ENCODE measurements at regions of chr2 and their contacts with region 1.

Region 1: DNA sequence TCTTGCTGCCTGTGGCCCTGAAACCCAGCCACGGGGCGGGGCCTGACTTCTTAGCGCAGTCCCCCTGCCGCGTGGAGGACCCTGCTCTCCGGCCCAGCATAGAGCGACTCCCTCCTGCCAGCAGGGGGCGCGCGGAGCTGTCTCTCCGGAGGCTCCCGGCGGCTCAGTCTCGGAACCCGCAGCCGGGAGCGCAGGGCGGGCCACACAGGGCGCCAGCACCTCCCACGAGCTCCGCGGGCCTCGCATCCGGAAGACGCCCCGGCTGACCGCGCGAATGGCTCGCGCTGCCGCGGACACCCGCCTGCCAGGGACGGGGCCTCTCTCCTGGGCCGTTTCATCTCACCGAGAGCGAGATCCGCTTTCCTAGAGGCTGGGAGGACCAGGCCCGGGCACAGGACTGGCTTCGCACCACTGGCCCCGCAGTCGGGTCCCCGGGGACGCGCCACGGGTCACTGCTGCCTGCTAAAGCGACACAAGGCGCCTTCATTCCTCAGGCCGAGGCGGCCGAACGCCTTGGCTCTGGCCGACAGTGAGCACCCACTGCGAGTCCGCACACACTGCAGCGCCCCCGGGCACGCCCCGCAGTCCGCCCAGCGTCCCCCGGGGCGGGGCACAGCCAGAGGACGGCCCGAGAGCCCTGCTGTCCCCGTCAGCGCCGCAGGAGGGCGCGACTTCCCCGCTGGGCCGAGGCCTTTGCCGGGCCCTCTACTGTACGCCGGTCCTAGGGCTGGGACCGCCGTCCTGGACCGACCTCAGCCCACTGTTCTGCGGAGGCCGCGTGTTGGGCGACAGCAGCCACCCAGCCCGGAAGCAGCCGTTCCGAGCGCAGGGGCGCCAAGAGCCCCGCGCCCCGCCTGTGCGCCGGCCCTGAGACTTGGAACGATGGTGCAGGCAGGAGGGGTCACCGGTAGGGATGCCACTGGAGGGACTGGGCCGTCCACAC is 39.0 kb upstream of the ARHGEF4 start:
- DNase-seq: peak; percentile 89
- ATAC-seq: peak; percentile 92
- H3K4me3 ChIP-seq: peak overlapping the region; percentile 86
- H3K27ac ChIP-seq: peak overlapping the region; percentile 61
- H3K4me1 ChIP-seq: peaks cover 8% of the 10 kb centered on the region; the same call in 1 of the 2 replicates
- H3K27me3 ChIP-seq: no peaks in the 10 kb centered on the region
- CTCF ChIP-seq: peak; percentile 77

Region 2: GRCh38 chr2:130824492-130825061 is 26.8 kb after region 1 on chr2:
- CTCF ChIA-PET with region 1: interaction called, 10 read pairs
- POLR2A ChIA-PET with region 1: no interaction called
- intact Hi-C with region 1: loop called (anchors 1 kb)
- DNase-seq: peak; percentile 92
- ATAC-seq: peak; percentile 30
- H3K4me3 ChIP-seq: no peak overlapping the region
- H3K27ac ChIP-seq: peak overlapping the region; percentile 97
- H3K4me1 ChIP-seq: peaks cover 52% of the 10 kb centered on the region
- H3K27me3 ChIP-seq: no peaks in the 10 kb centered on the region
- CTCF ChIP-seq: no peak

Region 3: GRCh38 chr2:130836501-130837174 is 38.9 kb after region 1 on chr2 and contains the start of gene ARHGEF4:
- CTCF ChIA-PET with region 1: no interaction called
- POLR2A ChIA-PET with region 1: no interaction called
- intact Hi-C with region 1: loop called (anchors 5 kb)
- DNase-seq: peak; percentile 66
- ATAC-seq: peak; percentile 88
- H3K4me3 ChIP-seq: peak within 1 kb of the TSS; percentile 89
- H3K27ac ChIP-seq: peak within 1 kb of the TSS; percentile 41
- H3K4me1 ChIP-seq: peaks cover 16% of the 10 kb centered on the region
- H3K27me3 ChIP-seq: no peaks in the 10 kb centered on the region
- CTCF ChIP-seq: no peak
- total RNA-seq, gene ARHGEF4: 21.5 and 30.5 TPM in 2 replicates

Region 4: GRCh38 chr2:130873700-130874346 is 76.1 kb after region 1 on chr2:
- CTCF ChIA-PET with region 1: interaction called, 23 read pairs
- POLR2A ChIA-PET with region 1: no interaction called
- intact Hi-C with region 1: loop called (anchors 1 kb)
- DNase-seq: peak; percentile 76
- ATAC-seq: peak; percentile 90
- H3K4me3 ChIP-seq: no peak overlapping the region
- H3K27ac ChIP-seq: no peak overlapping the region
- H3K4me1 ChIP-seq: no peaks in the 10 kb centered on the region
- H3K27me3 ChIP-seq: no peaks in the 10 kb centered on the region
- CTCF ChIP-seq: peak; percentile 80

Region 5: DNA sequence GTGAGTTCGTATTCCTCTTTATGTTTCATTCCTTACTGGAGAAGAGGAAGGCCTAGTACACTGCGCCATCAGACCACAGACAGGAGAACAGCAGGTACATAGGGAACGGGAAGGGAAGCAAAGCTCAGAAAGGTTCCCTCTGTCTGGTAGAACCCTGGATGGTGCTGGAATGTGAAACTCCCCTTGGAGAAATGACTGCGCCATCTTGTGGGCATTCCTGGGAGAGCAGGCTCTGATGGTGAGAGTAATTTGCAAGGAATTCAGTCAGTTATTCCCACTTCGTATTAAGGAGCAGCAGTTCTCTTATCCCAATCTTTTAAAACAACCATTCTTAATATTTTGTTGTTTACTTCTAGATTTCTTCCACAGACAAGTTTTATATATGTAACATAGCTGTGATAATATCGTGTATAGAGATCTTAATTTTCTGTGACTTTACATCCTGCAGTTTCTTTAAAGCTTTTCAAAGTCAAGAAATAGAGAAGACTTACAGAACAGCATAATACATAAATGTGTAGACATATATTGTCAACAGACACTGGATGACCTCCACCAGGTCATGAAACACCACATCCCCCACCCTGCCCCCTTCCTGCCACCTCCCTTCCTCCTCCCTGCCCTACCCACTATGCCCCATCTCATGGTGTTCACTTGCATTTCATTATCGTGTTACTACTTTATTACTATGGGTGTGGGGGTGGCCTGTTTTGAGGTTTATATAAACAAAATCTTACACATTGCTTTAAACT is 122.8 kb after region 1 on chr2:
- CTCF ChIA-PET with region 1: interaction called, 15 read pairs
- POLR2A ChIA-PET with region 1: no interaction called
- intact Hi-C with region 1: loop called (anchors 1 kb)
- DNase-seq: peak; percentile 87
- ATAC-seq: peak; percentile 88
- H3K4me3 ChIP-seq: no peak overlapping the region
- H3K27ac ChIP-seq: no peak overlapping the region
- H3K4me1 ChIP-seq: no peaks in the 10 kb centered on the region
- H3K27me3 ChIP-seq: no peaks in the 10 kb centered on the region
- CTCF ChIP-seq: peak; percentile 94

Region 6: DNA sequence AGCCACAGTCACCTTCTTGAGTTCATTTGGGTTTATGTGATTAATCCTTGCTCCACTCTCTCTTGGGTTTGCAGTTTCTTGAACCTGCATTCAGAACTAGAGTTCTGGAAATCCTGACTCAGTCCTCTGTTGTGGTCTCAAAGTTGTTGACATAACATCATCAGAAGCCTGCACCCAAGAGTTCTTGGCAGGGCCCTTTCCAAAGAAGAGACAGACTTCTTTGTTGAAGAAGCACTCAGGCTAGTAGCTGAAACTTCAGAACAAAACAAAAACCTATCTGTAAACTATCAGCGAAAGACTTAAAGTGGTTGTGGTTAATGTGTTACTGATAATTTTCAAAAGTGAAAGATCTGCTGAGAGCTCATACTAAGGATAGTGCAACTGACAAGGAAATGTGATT is 174.6 kb after region 1 on chr2:
- CTCF ChIA-PET with region 1: no interaction called
- POLR2A ChIA-PET with region 1: interaction called, 10 read pairs
- intact Hi-C with region 1: no loop called
- DNase-seq: peak; percentile 57
- ATAC-seq: peak; percentile 82
- H3K4me3 ChIP-seq: no peak overlapping the region
- H3K27ac ChIP-seq: no peak overlapping the region
- H3K4me1 ChIP-seq: no peaks in the 10 kb centered on the region
- H3K27me3 ChIP-seq: no peaks in the 10 kb centered on the region
- CTCF ChIP-seq: no peak

Region 7: GRCh38 chr2:131055169-131056065 is 257.7 kb after region 1 on chr2:
- CTCF ChIA-PET with region 1: no interaction called
- POLR2A ChIA-PET with region 1: no interaction called
- intact Hi-C with region 1: loop called (anchors 10 kb)
- DNase-seq: no peak
- ATAC-seq: no peak
- H3K4me3 ChIP-seq: no peak overlapping the region
- H3K27ac ChIP-seq: no peak overlapping the region
- H3K4me1 ChIP-seq: no peaks in the 10 kb centered on the region
- H3K27me3 ChIP-seq: no peaks in the 10 kb centered on the region
- CTCF ChIP-seq: no peak

Measured in PC-3 (cell line).